ENCODE measurements at regions of chr2 and their contacts with region 1.

Region 1: DNA sequence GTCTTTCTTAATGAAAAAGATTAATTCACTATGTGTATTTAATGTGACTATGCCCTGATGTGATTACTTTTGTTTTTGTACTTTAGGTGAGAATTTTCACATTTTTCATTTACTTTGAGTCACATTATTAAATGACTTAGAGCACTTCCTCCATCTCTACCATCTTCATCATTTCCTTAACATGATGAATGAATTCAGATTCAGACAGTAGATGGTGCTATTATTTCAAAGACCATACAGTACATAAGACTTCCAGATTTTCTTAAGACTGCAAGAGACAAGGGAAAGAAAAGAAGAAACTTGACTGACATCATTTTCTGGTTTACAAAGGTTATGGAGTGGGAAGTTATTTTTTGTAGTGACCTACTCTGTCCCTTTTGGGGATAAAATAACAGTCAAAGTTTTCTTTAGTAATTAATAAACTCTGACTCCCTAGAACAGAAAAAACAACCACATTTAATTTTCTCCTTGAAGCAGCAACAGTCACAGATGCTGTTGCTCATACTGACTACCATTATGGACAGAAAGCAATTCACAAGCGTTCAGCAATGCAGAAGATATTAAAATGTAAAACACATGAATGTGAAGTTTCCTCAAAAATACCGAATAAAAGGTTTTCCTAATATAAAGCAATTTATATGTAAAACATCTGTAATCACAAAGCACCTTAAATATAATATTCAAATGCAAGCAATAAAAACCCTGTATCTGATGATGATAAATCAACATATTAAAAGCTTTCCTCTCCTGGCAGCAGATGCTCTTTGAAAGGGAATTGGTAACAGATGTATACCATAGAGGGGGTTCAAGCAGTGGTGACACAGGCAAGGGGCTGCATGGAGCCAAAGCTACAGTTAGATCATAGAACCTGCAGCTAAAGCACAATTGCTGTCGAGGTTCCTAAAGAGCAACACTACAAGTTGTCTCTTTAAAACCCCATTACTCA is 1010.9 kb upstream of the NXPH2 start:
- DNase-seq: no peak
- ATAC-seq: no peak

Region 2: DNA sequence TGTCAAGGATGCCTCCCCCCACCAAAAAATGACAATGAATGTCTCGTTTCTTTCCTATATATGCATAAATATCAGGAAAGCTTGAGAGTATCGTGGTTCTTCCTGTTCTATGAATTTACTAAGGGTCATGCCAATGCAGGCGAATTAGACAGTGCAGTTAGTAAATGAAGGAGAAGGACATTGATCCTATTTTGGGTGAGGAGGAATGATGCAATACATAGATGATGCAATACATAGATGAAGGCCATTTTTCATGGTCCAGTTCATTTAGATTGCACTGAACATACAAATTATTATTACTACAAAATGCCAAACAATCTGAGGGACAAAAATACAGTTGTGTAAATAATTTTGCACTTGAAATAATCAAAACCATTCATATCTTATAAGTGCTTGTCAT is 1074.8 kb after region 1 on chr2:
- intact Hi-C with region 1: loop called (anchors 5 kb)
- DNase-seq: no peak
- ATAC-seq: no peak